Sigmoid colon (tissue), 7 donors: ENCODE measurements at regions of chr3 and their contacts with region 1.

Region 1: GRCh38 chr3:139329345-139329850 is 14.4 kb upstream of the MRPS22 start:
- DNase-seq: peak; percentile 84
- H3K4me3 ChIP-seq: peak overlapping the region in 2 of 4 donors; percentile 1 to 11
- H3K27ac ChIP-seq: no peak overlapping the region
- H3K4me1 ChIP-seq: peaks cover 0 to 9% (median 0%) of the 10 kb centered on the region in 4 donors
- H3K27me3 ChIP-seq: peaks cover 0 to 16% (median 0%) of the 10 kb centered on the region in 3 donors
- CTCF ChIP-seq: peak; percentile 61 to 99 (median 86)
- EP300 ChIP-seq: no peak
- POLR2A ChIP-seq: no peak

Region 2: GRCh38 chr3:138935848-138936740 is 393.3 kb before region 1 on chr3:
- intact Hi-C with region 1: loop called (anchors 1 kb)
- DNase-seq: peak; percentile 84
- H3K4me3 ChIP-seq: peak overlapping the region in 3 of 4 donors; percentile 19 to 42 (median 37)
- H3K27ac ChIP-seq: no peak overlapping the region
- H3K4me1 ChIP-seq: peaks cover 0 to 43% (median 37%) of the 10 kb centered on the region in 4 donors
- H3K27me3 ChIP-seq: peaks cover 52 to 66% (median 60%) of the 10 kb centered on the region in 3 donors
- CTCF ChIP-seq: peak; percentile 46 to 97 (median 68)
- EP300 ChIP-seq: no peak
- POLR2A ChIP-seq: no peak

Region 3: DNA sequence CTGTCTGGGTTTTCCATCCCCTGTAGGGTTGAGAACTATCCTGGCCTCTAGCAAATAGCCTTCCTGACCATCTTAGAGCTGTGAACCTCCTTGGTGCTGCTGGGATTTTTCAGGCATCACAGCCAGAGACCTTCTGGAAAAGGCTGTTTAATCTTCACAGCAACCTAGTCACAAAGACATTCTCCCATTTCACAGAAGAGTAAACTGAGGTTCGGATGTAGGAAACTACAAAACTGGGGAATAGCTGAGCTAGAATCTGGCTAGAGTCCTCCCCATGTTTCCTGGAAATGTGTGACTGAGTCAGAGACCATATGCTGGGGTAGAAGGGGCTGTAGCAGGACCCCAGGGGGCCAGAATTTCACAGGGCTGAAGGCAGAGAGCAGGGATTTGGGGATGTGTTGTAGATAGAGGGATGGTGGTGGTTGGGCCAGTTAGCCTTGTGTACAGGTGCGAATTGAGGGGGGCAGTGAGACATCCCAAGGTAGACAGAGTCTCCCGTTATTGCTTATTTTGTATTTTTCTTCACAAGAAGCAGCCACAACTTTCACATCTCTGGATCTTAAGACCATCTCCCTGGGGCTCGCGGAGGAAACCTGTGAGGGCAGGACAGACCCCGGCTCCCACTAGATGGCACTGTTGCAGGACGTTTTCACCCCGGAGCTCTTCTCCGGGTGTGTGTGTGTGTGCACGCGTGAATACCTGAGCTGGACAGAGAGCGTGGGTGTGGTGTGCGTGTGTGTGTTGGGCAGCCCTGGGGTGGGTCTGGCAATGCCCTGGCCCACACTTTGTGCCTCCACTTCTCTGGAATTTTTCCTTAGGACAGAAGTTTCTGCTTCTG is 217.8 kb before region 1 on chr3:
- intact Hi-C with region 1: loop called (anchors 2 kb)
- DNase-seq: no peak
- H3K4me3 ChIP-seq: no peak overlapping the region
- H3K27ac ChIP-seq: no peak overlapping the region
- H3K4me1 ChIP-seq: no peaks in the 10 kb centered on the region
- H3K27me3 ChIP-seq: peaks cover 0 to 9% (median 0%) of the 10 kb centered on the region in 3 donors
- CTCF ChIP-seq: peak in 3 of 4 experiments; percentile 21 to 56 (median 36)
- EP300 ChIP-seq: no peak
- POLR2A ChIP-seq: no peak

Region 4: DNA sequence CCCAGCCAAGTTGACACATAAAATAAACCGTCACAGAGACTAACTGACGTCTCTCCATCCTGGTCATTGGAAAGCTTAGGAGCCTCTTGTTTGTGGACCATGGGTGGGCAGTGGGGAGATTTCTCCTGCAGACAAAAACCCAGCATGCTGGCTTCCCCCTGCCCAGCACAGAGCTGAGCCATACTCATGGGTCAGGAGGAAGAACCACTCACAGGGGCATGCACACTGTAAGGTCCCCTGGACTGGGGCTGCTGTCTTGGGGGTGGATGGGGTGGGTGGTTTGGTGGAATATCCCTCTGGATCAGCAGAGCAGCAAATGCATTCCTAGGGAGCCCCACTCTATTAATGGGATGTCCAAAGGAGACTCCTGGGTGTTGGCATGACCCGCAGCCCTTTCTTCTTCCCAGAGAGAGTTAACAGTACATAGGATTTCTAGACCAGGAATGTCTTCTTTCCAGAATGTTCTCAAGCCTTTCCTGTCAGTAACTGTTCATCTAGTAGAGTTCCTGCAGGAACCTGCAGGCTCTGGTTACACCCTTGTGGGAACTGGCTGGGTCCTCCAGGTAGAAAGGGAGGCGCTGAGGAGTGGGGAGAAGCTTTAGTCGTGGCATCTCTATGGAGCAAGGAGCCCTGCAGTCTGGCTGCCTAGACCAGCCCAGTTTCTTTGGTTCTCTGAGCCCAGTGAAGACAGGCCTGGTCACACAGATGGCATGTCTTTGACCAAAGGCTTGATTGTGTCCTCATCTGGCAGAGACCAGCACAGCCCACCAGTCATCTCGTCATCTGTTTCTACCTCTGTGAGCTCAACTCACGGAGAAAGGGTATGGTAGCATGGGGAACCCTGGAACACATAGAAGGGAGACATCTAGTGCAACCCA is 211.3 kb before region 1 on chr3:
- intact Hi-C with region 1: loop called (anchors 2 kb)
- DNase-seq: no peak
- H3K4me3 ChIP-seq: no peak overlapping the region
- H3K27ac ChIP-seq: no peak overlapping the region
- H3K4me1 ChIP-seq: no peaks in the 10 kb centered on the region
- H3K27me3 ChIP-seq: no peaks in the 10 kb centered on the region
- CTCF ChIP-seq: no peak
- EP300 ChIP-seq: no peak
- POLR2A ChIP-seq: no peak